Sigmoid colon (tissue), 7 donors: ENCODE measurements at regions of chr11 and their contacts with region 1.

Region 1: DNA sequence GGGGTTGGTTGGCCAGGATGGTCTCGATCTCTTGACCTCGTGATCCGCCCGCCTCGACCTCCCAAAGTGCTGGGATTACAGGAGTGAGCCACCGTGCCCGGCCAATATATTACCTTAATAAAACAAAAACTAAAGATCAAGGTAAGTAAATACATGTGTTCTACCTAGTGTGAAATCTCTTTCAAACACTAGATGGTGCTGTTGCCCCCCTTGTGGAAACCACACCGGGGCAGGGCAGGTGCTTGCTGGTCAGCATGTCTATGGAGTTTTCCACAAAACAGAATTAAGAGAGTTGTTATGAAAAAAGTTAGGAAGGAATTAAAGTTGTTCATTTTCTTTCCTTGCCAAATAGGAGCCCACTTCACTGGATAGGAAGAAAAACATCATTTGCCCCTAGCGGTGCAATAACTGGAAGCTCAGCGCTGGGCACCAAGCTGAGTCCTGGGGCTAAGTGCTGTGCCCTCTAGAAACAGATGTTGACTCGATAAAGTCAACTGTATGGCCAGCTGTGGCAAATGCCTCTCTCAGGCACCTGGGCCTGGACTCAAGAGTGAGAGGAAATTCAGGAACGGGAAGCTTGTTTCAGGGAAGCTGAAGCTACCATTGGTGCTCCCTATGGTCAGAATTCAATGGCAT is 6.3 kb upstream of the KCNJ5 start:
- DNase-seq: peak; percentile 72
- H3K4me3 ChIP-seq: no peak overlapping the region
- H3K27ac ChIP-seq: no peak overlapping the region
- H3K4me1 ChIP-seq: no peaks in the 10 kb centered on the region
- H3K27me3 ChIP-seq: peaks cover 0 to 20% (median 13%) of the 10 kb centered on the region in 3 donors
- CTCF ChIP-seq: peak; percentile 64 to 75 (median 70)
- EP300 ChIP-seq: no peak
- POLR2A ChIP-seq: no peak

Region 2: DNA sequence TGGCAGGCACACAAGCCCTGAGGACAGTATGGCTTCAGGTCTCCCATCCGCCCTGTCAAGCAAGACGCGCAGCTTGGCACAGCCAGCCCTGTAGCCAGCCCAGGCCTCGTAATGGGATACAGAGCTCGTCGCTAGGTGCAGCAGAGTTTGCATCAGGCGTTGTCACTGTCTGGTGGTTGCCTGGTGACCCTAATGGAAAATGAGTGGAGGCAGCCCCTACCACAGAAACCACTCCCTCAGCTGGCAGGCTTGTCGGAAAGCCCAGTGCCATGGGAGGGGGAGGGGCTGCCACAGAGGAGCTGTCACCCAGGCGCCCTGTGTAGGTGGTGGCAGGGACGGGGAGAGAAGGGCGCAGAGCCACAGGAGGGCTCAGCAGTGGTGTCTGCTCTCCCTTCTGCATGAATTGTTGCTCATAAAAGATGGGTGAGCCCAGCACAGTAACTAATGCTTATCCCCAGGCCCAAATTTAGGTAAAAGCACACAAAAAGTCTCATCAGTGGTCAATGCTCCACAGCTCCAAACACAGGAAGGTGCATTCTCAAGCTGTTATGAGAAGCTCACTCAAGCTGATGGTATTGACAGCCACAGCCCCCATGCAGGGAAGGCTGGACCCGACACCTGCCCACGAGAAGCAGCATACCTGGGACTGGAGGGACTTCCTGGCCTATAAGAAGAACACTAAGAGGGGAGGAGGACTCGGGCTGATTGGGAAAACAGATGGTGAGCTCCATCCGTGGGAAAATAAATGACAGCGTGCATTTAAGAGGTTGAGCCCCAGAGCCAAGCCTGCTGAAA is 462.0 kb before region 1 on chr11:
- intact Hi-C with region 1: no loop called
- DNase-seq: no peak
- H3K4me3 ChIP-seq: no peak overlapping the region
- H3K27ac ChIP-seq: peak overlapping the region in 1 of 4 donors; percentile 6
- H3K4me1 ChIP-seq: peaks cover 0 to 29% (median 21%) of the 10 kb centered on the region in 4 donors
- H3K27me3 ChIP-seq: no peaks in the 10 kb centered on the region
- CTCF ChIP-seq: no peak
- EP300 ChIP-seq: no peak
- POLR2A ChIP-seq: no peak

Region 3: GRCh38 chr11:128905345-128906184 is 20.7 kb after region 1 on chr11:
- intact Hi-C with region 1: no loop called
- DNase-seq: no peak
- H3K4me3 ChIP-seq: peak overlapping the region; percentile 32 to 61 (median 55)
- H3K27ac ChIP-seq: peak overlapping the region; percentile 34 to 65 (median 56)
- H3K4me1 ChIP-seq: peaks cover 0 to 21% (median 17%) of the 10 kb centered on the region in 4 donors
- H3K27me3 ChIP-seq: peaks cover 0 to 37% (median 0%) of the 10 kb centered on the region in 3 donors
- CTCF ChIP-seq: peak in 2 of 4 experiments; percentile 8 to 49
- EP300 ChIP-seq: no peak
- POLR2A ChIP-seq: no peak

Region 4: GRCh38 chr11:128956401-128957201 is 71.8 kb after region 1 on chr11:
- intact Hi-C with region 1: loop called (anchors 1 kb)
- DNase-seq: no peak
- H3K4me3 ChIP-seq: no peak overlapping the region
- H3K27ac ChIP-seq: no peak overlapping the region
- H3K4me1 ChIP-seq: no peaks in the 10 kb centered on the region
- H3K27me3 ChIP-seq: peaks cover 0 to 5% (median 0%) of the 10 kb centered on the region in 3 donors
- CTCF ChIP-seq: peak; percentile 53 to 67 (median 57)
- EP300 ChIP-seq: no peak
- POLR2A ChIP-seq: no peak